HEK293 (cell line): ENCODE measurements at regions of chr15 and their contacts with region 1.

Region 1: DNA sequence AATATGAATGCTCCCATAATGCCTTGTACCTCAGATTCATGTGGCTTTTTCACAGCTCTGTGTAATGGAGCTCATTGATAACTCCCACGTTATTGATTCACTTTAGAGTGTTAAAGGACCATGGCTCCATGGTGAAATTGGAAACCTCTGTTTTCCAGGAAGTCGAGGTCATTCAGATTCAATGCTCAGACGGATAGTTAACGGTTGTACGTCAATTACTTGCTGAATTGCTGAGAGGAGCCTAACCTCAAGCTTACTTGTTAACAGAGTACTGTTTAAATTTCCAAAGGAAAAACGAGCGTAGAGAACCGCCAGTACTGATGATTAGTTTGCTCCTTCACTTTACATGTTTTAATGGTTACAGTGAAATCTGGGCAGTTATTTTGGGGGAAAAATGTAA is 11.1 kb downstream of the ABHD17C start:
- H3K4me3 ChIP-seq: no peak overlapping the region
- H3K27ac ChIP-seq: no peak overlapping the region
- H3K4me1 ChIP-seq: peaks cover 25% of the 10 kb centered on the region
- CTCF ChIP-seq: no peak

Region 2: GRCh38 chr15:80684697-80685096 is 21.5 kb before region 1 on chr15:
- CTCF ChIA-PET with region 1: no interaction called
- POLR2A ChIA-PET with region 1: no interaction called
- H3K4me3 ChIP-seq: no peak overlapping the region
- H3K27ac ChIP-seq: no peak overlapping the region
- H3K4me1 ChIP-seq: no peaks in the 10 kb centered on the region
- CTCF ChIP-seq: no peak

Region 3: DNA sequence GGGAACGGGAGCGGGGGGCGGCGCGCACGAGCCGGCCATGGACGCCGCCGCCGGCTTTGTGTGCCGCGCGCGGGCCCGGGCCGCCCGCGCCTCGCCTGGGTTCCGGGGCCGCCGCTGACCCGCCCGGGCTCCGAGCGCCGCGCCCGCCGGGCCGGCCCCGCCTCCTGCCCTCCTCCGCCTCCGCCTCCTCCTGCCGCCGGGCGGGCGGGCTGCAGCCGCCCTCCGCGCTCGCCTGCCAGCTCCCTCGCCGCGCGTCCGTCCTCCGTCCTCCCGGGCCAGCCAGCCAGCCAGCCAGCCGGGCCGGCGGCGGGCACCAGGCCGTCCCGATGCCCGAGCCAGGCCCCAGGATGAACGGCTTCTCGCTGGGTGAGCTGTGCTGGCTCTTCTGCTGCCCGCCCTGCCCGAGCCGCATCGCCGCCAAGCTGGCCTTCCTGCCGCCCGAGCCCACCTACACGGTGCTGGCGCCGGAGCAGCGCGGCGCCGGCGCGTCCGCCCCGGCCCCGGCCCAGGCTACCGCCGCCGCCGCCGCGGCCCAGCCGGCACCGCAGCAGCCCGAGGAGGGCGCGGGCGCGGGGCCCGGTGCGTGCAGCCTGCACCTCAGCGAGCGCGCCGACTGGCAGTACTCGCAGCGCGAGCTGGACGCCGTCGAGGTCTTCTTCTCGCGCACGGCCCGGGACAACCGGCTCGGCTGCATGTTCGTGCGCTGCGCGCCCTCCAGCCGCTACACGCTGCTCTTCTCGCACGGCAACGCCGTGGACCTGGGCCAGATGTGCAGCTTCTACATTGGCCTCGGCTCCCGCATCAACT is 10.9 kb before region 1 on chr15 and contains the start of gene ABHD17C:
- CTCF ChIA-PET with region 1: interaction called, 4 read pairs
- POLR2A ChIA-PET with region 1: interaction called, 20 read pairs
- H3K4me3 ChIP-seq: peak within 1 kb of the TSS; percentile 56
- H3K27ac ChIP-seq: peak within 1 kb of the TSS; percentile 90
- H3K4me1 ChIP-seq: peaks cover 6% of the 10 kb centered on the region
- CTCF ChIP-seq: no peak

Region 4: GRCh38 chr15:80893777-80894176 is 187.6 kb after region 1 on chr15:
- CTCF ChIA-PET with region 1: no interaction called
- POLR2A ChIA-PET with region 1: no interaction called
- H3K4me3 ChIP-seq: no peak overlapping the region
- H3K27ac ChIP-seq: no peak overlapping the region
- H3K4me1 ChIP-seq: no peaks in the 10 kb centered on the region
- CTCF ChIP-seq: no peak